AG04449 (cell line): ENCODE measurements at regions of chr11 and their contacts with region 1.

Region 1: DNA sequence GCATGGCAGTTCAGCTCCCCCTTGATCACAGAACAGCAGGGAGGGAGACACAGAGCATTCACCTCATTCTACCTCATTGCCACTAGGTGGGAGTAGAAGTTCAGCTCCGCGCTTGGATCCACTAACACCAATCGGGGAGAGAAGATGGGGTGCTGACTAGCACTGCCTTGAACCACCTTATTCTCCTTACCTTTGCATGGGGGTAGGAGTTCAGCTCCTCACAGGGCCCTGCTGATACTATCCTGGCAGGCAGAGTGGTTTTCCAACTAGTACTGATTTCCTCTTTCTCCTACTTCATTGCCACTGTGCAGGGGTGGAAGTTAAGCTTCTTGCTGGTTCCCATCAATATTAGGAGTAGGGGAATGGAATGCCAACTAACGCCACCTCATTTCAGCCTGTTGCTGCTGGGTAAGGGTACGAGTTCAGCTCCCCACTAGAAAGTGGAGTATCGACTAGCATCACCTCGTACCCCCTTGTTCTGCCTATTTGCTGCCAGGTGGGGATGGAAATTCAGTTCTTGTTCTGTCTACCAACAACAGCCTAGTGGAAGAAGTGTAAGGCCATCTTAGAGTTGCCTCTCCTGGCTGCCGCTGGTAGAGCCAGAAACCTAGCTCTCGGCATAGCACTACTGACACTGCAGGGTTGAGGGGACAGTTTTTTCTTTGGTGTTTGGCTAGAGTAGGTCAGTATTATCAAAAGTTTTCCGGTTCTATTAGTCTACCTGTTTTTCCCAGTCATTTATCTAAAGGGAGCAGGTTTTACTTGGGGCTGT is 550.9 kb upstream of the CCDC90B start:
- DNase-seq: no peak
- H3K4me3 ChIP-seq: no peak overlapping the region
- CTCF ChIP-seq: peak; percentile 88

Region 2: GRCh38 chr11:83656931-83657330 is 180.1 kb before region 1 on chr11:
- CTCF ChIA-PET with region 1: no interaction called
- POLR2A ChIA-PET with region 1: no interaction called
- DNase-seq: no peak
- H3K4me3 ChIP-seq: no peak overlapping the region
- CTCF ChIP-seq: no peak

Region 3: GRCh38 chr11:83819933-83820549 is 17.0 kb before region 1 on chr11:
- CTCF ChIA-PET with region 1: interaction called, 24 read pairs
- POLR2A ChIA-PET with region 1: no interaction called
- DNase-seq: peak; percentile 26
- H3K4me3 ChIP-seq: no peak overlapping the region
- CTCF ChIP-seq: peak; percentile 35

Region 4: GRCh38 chr11:84384731-84385130 is 547.7 kb after region 1 on chr11:
- CTCF ChIA-PET with region 1: interaction called, 25 read pairs
- POLR2A ChIA-PET with region 1: no interaction called
- DNase-seq: peak; percentile 21
- H3K4me3 ChIP-seq: no peak overlapping the region
- CTCF ChIP-seq: peak; percentile 74

Region 5: DNA sequence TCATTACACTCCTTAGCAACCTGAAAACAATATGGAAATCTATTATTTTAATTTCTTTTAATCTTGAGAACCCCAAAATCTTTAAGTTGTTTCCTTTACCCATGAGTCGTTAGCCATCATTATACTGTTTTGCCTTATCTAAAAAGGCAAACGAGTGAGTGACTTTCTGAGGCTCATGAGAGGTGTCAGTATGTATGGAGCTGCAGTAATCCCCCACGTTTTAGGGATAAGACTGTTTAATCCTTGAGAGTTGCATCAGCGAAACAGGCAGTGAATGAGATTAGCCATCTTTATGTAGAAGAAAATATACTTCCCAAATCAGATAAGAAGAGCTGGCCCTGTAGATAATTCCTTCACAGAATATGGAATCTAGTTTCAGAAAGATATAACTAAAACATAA is 643.1 kb after region 1 on chr11:
- CTCF ChIA-PET with region 1: no interaction called
- POLR2A ChIA-PET with region 1: no interaction called
- DNase-seq: no peak
- H3K4me3 ChIP-seq: no peak overlapping the region
- CTCF ChIP-seq: no peak

Region 6: DNA sequence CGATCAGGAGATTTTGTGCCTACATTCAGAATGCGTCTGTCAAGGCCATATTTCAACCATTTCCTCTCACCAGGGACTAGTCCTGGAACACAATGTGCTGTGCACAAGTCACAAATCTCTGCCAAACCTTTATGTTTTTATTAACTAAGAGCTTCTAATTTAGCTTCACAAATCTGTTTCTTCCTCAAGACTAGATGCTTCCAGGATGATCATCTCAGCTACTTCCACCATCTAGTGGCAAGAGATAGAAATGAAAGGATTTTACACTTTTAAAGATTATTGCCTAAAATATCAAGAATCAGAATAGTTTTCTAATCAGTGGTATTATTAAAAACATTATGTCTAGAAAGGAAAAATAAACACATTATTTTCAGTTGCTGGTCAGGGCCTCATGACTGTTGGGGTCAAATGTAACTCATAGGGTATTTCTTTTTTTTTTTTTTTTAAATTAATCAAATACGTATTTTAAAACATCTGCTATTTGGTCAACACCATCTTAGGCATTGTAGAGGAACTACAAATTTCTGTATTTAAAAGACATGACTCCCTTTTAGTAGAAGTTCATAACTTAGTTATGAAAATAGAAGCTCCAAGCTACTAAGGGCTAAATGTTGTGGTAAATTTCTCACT is 687.5 kb after region 1 on chr11:
- CTCF ChIA-PET with region 1: interaction called, 119 read pairs
- POLR2A ChIA-PET with region 1: no interaction called
- DNase-seq: no peak
- H3K4me3 ChIP-seq: no peak overlapping the region
- CTCF ChIP-seq: peak; percentile 40

Region 7: DNA sequence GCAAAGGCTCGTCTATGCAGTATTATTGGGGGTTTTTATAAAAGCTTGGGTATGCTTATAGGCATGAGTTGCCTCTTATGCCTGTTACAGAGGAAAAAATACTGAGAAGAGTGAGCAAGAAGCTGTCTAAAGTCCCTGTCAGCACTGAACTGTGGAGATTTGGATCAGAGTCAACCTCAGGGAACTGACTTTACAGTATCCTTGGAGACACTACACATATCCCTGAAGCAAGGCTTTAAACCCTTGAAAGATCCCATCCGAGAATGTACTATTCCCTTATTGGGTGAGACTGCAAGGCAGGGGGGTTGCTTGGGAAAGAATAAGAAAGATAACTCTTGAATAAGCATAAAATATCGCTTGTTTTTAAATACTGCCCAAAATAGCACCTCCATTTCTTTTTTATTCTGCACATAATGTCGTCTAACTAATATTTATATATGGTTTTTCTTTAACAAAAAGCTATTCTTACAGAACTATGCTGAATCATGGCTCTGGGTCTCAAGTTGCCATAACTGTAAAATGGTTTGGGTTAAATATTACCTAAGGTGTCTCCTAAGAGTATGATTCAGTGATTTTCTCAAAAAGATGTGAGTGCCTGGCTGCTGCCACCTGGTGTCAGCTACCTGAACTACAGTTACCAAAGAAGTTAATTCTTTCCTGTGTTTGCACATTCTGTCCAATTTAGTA is 727.3 kb after region 1 on chr11:
- CTCF ChIA-PET with region 1: interaction called, 75 read pairs
- POLR2A ChIA-PET with region 1: no interaction called
- DNase-seq: no peak
- H3K4me3 ChIP-seq: no peak overlapping the region
- CTCF ChIP-seq: peak; percentile 61